Right lobe of liver (tissue), 6 donors: ENCODE measurements at regions of chr2 and their contacts with region 1.

Region 1: DNA sequence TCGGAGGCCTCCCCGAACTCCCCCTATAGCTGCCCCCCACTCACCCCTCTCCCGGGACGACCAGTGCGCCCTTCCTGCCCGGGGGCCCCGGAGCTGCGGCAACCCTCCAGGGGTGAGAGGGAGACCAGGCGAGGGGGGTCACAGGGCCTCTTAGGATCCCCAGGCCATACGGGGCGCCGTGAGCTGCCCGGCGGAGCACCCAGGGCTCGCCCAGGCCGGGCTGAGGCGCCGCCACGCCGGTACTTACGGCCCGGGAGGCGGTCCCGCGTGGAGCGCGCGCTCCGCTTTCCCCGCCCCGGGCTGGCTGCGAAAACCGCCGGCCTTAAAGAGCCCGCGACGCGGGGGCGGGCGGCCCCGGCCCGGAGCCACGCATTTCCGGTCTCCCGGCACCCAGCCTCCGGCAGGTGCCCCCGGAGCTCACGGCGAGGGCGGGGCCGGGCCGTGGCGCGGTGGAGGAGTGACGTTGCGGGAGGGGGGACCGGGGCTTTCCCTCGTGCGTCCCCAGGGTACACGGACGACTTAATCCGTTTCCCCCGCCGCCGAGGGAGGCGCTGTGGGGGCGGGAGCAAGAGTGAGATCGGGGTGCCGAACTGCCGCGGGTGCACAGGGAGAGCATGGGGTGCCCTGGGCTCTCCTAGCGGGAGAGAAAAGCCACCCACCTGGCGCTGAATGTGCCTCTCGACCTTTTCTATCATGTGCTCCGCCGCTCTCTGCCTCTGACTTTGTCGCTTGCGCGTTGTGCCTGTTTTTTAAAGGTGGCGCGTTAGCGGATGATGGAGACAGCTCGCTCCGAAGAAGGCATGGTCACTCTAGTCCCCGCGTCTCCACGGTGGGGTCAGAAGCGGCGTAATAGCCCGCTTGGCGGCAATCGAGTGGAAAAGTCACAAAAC is at the start of gene METTL21A:
- DNase-seq: peak; percentile 94 to 96 (median 96)
- ATAC-seq: peak; percentile 81 to 91 (median 86)
- H3K4me3 ChIP-seq: peak within 1 kb of the TSS; percentile 78 to 97 (median 79)
- H3K27ac ChIP-seq: peak within 1 kb of the TSS; percentile 95 to 97 (median 95)
- H3K4me1 ChIP-seq: peaks cover 0 to 6% (median 2%) of the 10 kb centered on the region in 4 donors
- H3K27me3 ChIP-seq: no peaks in the 10 kb centered on the region
- CTCF ChIP-seq: peak; percentile 33 to 52 (median 43)
- POLR2A ChIP-seq: peak; percentile 89
- total RNA-seq, gene METTL21A: 7.2 to 24.1 (median 9.8) TPM

Region 2: GRCh38 chr2:207734264-207734635 is 109.0 kb after region 1 on chr2:
- intact Hi-C with region 1: loop called in 1 of 2 experiments (anchors 10 kb)
- DNase-seq: no peak
- ATAC-seq: peak; percentile 90 to 95 (median 92)
- H3K4me3 ChIP-seq: peak overlapping the region in 2 of 3 donors; percentile 15 to 36
- H3K27ac ChIP-seq: peak overlapping the region in 2 of 3 donors; percentile 33 to 78
- H3K4me1 ChIP-seq: peaks cover 0 to 25% (median 6%) of the 10 kb centered on the region in 4 donors
- H3K27me3 ChIP-seq: no peaks in the 10 kb centered on the region
- CTCF ChIP-seq: peak; percentile 45 to 65 (median 58)
- POLR2A ChIP-seq: no peak